GM13976 (cell line): ENCODE measurements at regions of chr7 and their contacts with region 1.

Region 1: GRCh38 chr7:121547544-121548092 is 151.5 kb upstream of the FAM3C start:
- DNase-seq: peak; percentile 58
- CTCF ChIP-seq: peak; percentile 55

Region 2: GRCh38 chr7:121049028-121049791 is 498.4 kb before region 1 on chr7:
- in situ Hi-C with region 1: no loop called
- DNase-seq: no peak
- CTCF ChIP-seq: no peak

Region 3: GRCh38 chr7:121138262-121138933 is 409.2 kb before region 1 on chr7:
- in situ Hi-C with region 1: loop called (anchors 25 kb)
- DNase-seq: no peak
- CTCF ChIP-seq: no peak

Region 4: DNA sequence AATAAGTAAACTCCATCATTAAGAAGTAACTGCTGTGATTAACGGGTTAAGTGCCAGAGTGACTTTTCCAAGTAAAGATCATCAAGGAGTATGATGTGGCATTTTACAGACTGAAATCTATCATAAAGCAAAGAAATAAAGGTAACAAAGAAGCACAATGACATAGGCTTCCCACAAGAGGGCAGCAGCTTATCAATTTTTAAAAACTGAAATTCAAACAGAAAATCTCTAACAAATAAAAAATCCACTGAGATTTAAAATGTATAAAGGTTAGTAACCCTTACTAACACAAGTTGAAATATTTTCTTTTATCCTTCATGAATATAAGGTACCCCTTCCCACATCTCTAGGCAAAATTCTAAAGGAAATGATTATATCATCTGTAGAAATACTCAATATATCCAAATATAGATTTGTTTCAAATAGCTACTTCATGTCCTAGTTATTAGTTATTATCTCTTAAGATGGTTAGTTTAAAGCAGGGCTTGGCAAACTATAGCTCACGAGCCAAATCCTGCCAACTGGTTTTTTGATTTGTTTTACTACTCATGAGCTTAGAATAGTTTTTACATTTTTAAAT is 180.7 kb before region 1 on chr7:
- in situ Hi-C with region 1: loop called (anchors 10 kb)
- DNase-seq: peak; percentile 24
- CTCF ChIP-seq: peak; percentile 21